ENCODE measurements at regions of chr2 and their contacts with region 1.

Region 1: GRCh38 chr2:215188078-215188477 is 49.7 kb upstream of the ABCA12 start:
- DNase-seq: peak; percentile 4
- H3K4me3 ChIP-seq: no peak overlapping the region
- H3K27ac ChIP-seq: no peak overlapping the region
- H3K4me1 ChIP-seq: peaks cover 35% of the 10 kb centered on the region
- H3K27me3 ChIP-seq: no peaks in the 10 kb centered on the region
- CTCF ChIP-seq: no peak

Region 2: GRCh38 chr2:215071667-215072066 is 116.4 kb before region 1 on chr2:
- CTCF ChIA-PET with region 1: no interaction called
- dilution Hi-C with region 1: no loop called
- in situ Hi-C with region 1: no loop called
- intact Hi-C with region 1: loop called (anchors 1 kb)
- DNase-seq: peak; percentile 96
- H3K4me3 ChIP-seq: no peak overlapping the region
- H3K27ac ChIP-seq: peak overlapping the region; percentile 73
- H3K4me1 ChIP-seq: peaks cover 12% of the 10 kb centered on the region
- H3K27me3 ChIP-seq: no peaks in the 10 kb centered on the region
- CTCF ChIP-seq: no peak

Region 3: GRCh38 chr2:215171151-215171550 is 16.9 kb before region 1 on chr2:
- CTCF ChIA-PET with region 1: no interaction called
- dilution Hi-C with region 1: no loop called
- in situ Hi-C with region 1: no loop called
- intact Hi-C with region 1: no loop called
- DNase-seq: peak; percentile 19
- H3K4me3 ChIP-seq: peak overlapping the region; percentile 34 to 57 (median 48)
- H3K27ac ChIP-seq: no peak overlapping the region
- H3K4me1 ChIP-seq: peaks cover 9% of the 10 kb centered on the region
- H3K27me3 ChIP-seq: no peaks in the 10 kb centered on the region
- CTCF ChIP-seq: no peak

Region 4: DNA sequence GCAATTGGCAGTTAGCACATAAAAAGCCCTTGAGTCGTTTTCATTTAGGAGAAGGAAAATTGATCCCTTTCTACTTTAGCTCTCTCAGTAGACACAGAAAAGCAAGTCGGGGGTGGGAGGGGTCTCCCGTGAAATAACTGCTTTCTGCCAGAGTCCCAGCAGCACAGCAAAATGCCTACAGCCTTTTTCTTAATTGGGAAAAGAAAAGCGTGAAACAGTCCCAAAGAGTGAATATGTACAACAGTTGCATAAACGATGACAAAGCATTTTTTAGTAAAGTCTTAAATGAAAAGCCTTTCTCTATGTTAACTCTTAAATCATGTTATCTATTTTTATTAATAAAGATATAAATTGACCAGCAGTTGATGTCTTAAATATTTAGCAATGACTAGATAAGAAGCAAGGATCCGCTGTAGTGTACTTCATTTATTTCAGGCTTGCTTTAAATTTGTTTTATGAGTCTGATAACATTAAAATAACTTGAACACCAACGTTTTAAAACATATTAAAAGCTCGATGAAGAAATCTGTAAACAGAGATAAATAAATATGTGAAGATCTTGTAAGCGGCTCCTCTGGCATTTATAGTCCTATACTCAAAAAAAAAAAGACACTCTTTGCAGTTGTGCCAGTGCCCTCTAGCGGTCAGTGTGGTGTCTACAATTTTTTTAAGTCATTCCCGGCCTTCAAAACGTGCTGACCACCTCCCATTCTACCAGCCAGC is 81.5 kb after region 1 on chr2:
- CTCF ChIA-PET with region 1: no interaction called
- dilution Hi-C with region 1: no loop called
- in situ Hi-C with region 1: no loop called
- intact Hi-C with region 1: loop called (anchors 5 kb)
- DNase-seq: peak; percentile 56
- H3K4me3 ChIP-seq: no peak overlapping the region
- H3K27ac ChIP-seq: no peak overlapping the region
- H3K4me1 ChIP-seq: peaks cover 3% of the 10 kb centered on the region
- H3K27me3 ChIP-seq: no peaks in the 10 kb centered on the region
- CTCF ChIP-seq: peak; percentile 68 to 73

Measured in mammary epithelial cell (primary cell).